Right cardiac atrium (tissue), 5 donors: ENCODE measurements at regions of chr10 and their contacts with region 1.

Region 1: DNA sequence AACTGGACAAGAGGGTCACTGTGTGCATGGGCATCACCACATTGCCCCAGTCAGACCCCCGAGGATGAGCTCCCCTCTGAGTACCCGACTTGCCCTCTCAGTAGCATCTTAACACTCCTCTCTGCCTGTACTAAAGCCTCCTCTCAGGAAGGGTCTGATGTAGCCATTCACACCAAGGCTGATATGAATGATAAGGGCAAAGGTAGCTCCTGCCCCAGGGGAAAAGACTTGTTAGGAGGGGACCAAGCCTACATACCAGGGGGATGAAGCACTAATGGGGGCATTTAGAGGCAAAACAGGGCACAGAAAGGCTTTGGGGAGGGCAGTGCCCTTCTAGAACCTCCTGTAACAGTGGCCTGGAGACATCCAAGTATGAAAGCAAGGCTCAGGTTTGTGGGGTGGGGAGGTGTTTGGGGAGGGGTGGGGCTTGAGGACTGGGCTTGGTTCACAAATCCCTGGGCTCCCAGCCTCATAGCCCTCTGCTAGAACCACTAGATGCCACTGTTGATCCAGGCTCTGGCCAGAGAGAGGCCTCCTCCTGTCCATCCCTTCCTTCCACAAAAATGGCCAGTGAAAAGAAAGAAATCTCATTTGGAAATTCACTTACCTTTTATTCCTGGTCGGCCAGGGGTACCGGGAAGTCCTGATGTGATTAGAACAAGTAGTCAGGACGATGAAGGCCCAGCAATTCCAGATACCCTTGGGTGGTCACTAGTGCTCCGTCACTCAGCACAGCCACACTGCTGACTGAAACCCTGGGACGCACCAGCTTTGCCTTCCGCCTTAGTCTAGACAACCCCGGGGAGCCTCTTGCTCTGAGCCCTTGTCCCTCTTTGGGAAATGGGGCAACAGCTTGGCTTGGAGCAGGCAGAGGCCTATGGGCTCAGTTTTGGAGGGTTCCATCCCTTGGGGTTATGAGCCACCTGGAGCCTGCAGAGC is 40.3 kb downstream of the COL17A1 start:
- DNase-seq: peak in 2 of 3 donors; percentile 45 to 68
- ATAC-seq: peak; percentile 71 to 76
- H3K4me3 ChIP-seq: no peak overlapping the region
- H3K27ac ChIP-seq: no peak overlapping the region
- H3K4me1 ChIP-seq: no peaks in the 10 kb centered on the region
- H3K27me3 ChIP-seq: no peaks in the 10 kb centered on the region

Region 2: DNA sequence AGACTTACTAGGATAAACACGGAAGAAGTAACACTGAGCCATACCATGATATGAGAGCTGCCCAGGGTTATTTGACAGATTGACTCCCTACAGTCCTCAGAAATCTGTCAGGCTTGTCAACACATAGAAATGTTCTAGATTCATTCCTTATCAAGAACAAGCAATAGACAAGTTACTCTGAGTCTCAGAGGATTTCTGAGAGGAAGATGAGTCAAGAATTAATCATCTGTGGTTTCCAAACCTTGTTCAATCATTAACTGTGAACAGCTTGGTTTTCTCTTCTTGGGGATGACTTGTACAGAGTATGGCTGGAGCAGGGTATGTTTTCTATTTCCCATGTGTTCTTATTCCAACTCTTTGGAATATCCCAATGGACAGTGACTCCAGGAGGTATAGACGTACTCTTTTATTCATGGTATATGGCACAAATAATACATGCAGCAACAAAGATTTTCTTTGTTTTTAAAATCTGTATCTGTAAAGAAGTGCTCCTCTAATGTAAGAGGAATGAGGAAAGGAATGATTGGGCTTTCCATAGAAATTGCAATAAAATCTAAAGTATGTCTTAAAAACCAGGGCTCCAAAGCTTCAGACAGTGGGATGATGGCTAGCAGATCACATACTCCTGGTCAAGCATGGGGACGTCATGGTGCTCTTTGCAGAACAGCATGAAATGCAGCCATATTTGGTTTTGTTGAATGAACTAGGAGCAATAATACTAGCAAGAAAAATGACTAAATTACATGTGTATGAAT is 64.7 kb after region 1 on chr10:
- intact Hi-C with region 1: no loop called
- DNase-seq: no peak
- ATAC-seq: no peak
- H3K4me3 ChIP-seq: no peak overlapping the region
- H3K27ac ChIP-seq: no peak overlapping the region
- H3K4me1 ChIP-seq: no peaks in the 10 kb centered on the region
- H3K27me3 ChIP-seq: no peaks in the 10 kb centered on the region

Region 3: GRCh38 chr10:104209575-104210198 is 164.3 kb after region 1 on chr10:
- intact Hi-C with region 1: loop called (anchors 5 kb)
- DNase-seq: no peak
- ATAC-seq: peak; percentile 45 to 70
- H3K4me3 ChIP-seq: no peak overlapping the region
- H3K27ac ChIP-seq: no peak overlapping the region
- H3K4me1 ChIP-seq: no peaks in the 10 kb centered on the region
- H3K27me3 ChIP-seq: no peaks in the 10 kb centered on the region